ENCODE measurements at regions of chr6 and their contacts with region 1.

Region 1: GRCh38 chr6:28758046-28758817 is 165.6 kb downstream of the TRIM27 start:
- DNase-seq: peak; percentile 86
- H3K4me3 Mint-ChIP-seq: peak overlapping the region; percentile 68
- H3K27ac Mint-ChIP-seq: peak overlapping the region; percentile 70
- H3K4me1 Mint-ChIP-seq: peaks cover 18% of the 10 kb centered on the region
- H3K27me3 Mint-ChIP-seq: no peaks in the 10 kb centered on the region
- CTCF ChIP-seq: no peak

Region 2: DNA sequence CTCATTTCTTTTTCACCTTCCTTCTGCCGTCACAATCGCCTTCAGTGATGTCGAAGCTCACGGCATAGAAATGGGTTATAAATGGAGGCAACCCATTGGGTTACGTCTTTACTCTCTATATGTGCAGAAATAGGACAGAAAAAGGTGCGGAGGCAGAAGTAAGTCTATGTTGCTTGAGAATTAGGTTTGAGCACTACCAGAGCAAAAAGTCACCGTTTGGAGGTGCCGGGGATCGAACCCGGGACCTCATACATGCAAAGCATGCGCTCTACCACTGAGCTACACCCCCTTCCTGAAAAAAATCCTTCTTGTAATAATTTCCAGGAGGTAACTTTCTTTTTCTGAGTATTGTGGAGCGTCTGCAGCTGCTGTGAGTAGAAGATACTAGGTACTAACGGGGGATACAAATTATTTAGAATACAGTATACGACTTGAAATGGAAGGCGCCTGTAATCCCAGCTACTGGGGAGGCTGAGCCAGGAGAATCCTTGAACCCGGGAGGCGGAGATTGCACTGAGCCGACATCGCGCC is 31.4 kb after region 1 on chr6:
- CTCF ChIA-PET with region 1: no interaction called
- intact Hi-C with region 1: loop called (anchors 5 kb)
- DNase-seq: peak; percentile 59
- H3K4me3 Mint-ChIP-seq: peak overlapping the region; percentile 63
- H3K27ac Mint-ChIP-seq: peak overlapping the region; percentile 78
- H3K4me1 Mint-ChIP-seq: peaks cover 5% of the 10 kb centered on the region
- H3K27me3 Mint-ChIP-seq: peaks cover 45% of the 10 kb centered on the region
- CTCF ChIP-seq: no peak

Region 3: DNA sequence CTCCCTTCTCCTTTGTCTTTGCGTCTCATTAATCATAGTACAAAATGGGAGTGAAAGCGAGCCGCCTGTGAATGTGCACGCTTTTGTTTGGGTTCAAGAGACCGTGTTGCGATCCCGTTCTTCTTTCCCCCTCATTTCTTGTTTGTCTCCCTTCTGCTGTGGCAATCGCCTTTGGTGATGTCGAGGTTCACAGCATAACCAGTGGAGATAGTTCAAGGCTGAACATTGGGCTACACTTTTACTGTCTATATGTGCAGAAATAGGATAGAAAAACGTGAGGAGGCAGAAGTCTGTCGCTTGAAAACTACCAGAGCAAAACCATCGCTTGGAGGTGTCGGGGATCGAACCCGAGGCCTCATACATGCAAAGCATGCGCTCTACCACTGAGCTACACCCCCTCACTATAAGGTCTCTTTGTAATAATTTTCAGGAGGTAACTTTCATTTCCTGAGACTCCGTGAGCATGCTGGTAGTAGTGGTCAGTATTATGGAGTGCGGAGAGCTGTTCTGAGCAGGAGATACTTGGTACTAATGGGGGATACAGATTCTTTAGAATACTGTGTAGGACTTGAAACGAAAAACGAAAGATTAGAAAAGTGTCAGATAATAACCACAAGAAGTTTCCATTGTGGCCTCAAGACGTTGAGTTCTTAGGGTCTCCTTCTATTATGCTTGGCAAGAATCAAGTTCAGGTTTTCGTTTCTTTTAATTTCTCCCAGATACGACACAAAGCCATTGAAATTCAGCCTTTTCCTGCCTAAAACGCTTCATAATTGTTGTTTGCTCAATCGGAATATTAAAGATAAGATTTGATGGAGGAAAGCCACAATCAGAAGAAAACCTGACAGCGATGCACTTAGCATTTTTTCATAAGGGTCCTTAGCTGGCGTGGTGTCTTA is 58.9 kb after region 1 on chr6:
- CTCF ChIA-PET with region 1: no interaction called
- intact Hi-C with region 1: loop called (anchors 10 kb)
- DNase-seq: peak; percentile 70
- H3K4me3 Mint-ChIP-seq: peak overlapping the region; percentile 60
- H3K27ac Mint-ChIP-seq: peak overlapping the region; percentile 50
- H3K4me1 Mint-ChIP-seq: peaks cover 19% of the 10 kb centered on the region
- H3K27me3 Mint-ChIP-seq: peaks cover 40% of the 10 kb centered on the region
- CTCF ChIP-seq: no peak

Region 4: GRCh38 chr6:29082457-29082856 is 324.2 kb after region 1 on chr6:
- CTCF ChIA-PET with region 1: no interaction called
- intact Hi-C with region 1: no loop called
- DNase-seq: no peak
- H3K4me3 Mint-ChIP-seq: no peak overlapping the region
- H3K27ac Mint-ChIP-seq: no peak overlapping the region
- H3K4me1 Mint-ChIP-seq: no peaks in the 10 kb centered on the region
- H3K27me3 Mint-ChIP-seq: no peaks in the 10 kb centered on the region
- CTCF ChIP-seq: no peak